ENCODE measurements at regions of chrX and their contacts with region 1.

Region 1: DNA sequence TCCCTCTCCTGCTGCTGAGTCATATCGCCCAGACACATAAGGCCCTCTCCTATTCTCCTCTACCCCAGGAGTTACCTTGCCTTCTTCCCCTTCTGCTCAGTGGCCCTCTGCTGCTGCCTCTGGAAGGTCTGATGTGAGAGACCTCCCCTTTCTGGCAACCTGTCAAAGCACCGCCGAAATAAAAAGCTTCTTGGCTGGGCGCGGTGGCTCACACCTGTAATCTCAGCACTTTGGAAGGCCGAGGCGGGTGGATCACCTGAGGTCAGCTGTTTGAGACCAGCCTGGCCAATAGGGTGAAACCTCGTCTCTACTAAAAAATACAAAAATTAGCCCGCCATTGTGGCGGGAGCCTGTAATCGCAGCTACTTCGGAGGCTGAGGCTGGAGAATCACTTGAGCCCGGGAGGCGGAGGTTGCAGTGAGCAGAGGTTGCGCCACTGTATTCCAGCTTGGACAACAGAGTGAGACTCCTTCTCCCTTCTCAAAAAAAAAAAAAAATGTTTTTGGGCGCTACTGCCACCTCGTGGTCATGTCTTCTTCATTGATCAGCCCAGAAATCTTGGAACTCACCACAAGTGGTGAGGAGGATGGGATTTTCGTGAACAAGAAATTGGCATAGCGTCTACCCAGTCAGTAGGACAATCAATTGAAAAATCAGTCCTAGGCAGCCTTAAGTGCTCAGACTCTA is 8.6 kb upstream of the ZXDA start:
- DNase-seq: no peak
- CTCF ChIP-seq: peak; percentile 38

Region 2: DNA sequence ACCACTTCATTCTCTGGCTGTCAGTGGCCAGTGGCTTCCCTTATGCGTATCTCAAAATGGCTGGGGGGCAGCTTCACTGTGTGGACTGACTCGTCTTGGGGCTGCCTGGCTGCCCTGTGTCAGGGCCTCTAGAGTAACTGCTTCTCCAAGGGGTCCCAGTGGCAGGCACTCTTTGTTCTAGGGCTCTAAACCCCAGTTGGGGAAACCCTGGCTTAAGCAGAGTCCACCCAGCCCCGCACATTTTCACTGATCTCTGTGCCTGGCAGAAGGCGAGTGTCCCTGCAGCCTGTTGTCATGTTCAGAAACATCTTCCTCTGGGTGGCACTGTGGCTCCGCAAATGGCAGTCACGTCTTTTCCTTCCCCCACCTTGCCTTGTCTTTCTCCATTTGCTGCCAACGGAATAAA is 1130.2 kb before region 1 on chrX:
- in situ Hi-C with region 1: loop called (anchors 25 kb)
- DNase-seq: peak; percentile 36
- CTCF ChIP-seq: peak; percentile 67

Region 3: GRCh38 chrX:57595381-57595811 is 323.5 kb before region 1 on chrX:
- in situ Hi-C with region 1: loop called (anchors 25 kb)
- DNase-seq: no peak
- CTCF ChIP-seq: no peak